H1 (cell line): ENCODE measurements at regions of chr6 and their contacts with region 1.

Region 1: GRCh38 chr6:158143700-158144099 is 24.4 kb downstream of the SERAC1 start:
- DNase-seq: no peak
- H3K4me3 ChIP-seq: no peak overlapping the region
- H3K27ac ChIP-seq: no peak overlapping the region
- H3K4me1 ChIP-seq: no peaks in the 10 kb centered on the region
- H3K27me3 ChIP-seq: no peaks in the 10 kb centered on the region
- CTCF ChIP-seq: peak; percentile 24 to 71 (median 71)
- EP300 ChIP-seq: no peak
- POLR2A ChIP-seq: no peak
- RAD21 ChIP-seq: peak; percentile 69 to 79

Region 2: DNA sequence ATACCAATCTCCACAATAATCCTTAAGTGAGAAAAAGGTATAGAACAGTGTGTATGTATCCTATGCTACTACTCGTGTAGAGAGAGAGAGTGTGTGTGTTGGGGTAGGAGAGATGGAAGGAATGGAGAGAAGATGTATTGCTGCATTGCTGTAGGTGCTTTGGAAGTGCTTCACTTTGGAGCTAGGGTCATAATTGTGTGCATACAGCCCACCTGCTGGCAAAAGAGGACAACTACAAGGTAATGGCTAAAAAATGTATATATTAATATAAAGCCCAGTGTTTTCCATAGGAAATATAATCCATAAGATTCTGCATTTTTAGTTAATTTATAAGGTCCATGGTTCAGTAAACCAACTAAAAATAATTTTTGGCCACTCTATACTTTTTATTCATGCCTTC is 11.8 kb before region 1 on chr6:
- CTCF ChIA-PET with region 1: interaction called, 39 read pairs
- POLR2A ChIA-PET with region 1: no interaction called
- DNase-seq: no peak
- H3K4me3 ChIP-seq: no peak overlapping the region
- H3K27ac ChIP-seq: no peak overlapping the region
- H3K4me1 ChIP-seq: no peaks in the 10 kb centered on the region
- H3K27me3 ChIP-seq: no peaks in the 10 kb centered on the region
- CTCF ChIP-seq: peak in 1 of 3 experiments; percentile 27; a peak in 1 of 4 replicates
- EP300 ChIP-seq: no peak
- POLR2A ChIP-seq: no peak
- RAD21 ChIP-seq: peak; percentile 21 to 39; a peak in 2 of 4 replicates

Region 3: GRCh38 chr6:158158748-158159147 is 15.0 kb after region 1 on chr6:
- CTCF ChIA-PET with region 1: interaction called, 17 read pairs
- POLR2A ChIA-PET with region 1: no interaction called
- DNase-seq: no peak
- H3K4me3 ChIP-seq: no peak overlapping the region
- H3K27ac ChIP-seq: no peak overlapping the region
- H3K4me1 ChIP-seq: peaks cover 0 to 10% (median 5%) of the 10 kb centered on the region in 4 experiments; a peak in 4 of 7 replicates
- H3K27me3 ChIP-seq: no peaks in the 10 kb centered on the region; a peak in 1 of 7 replicates
- CTCF ChIP-seq: no peak
- EP300 ChIP-seq: no peak
- POLR2A ChIP-seq: no peak
- RAD21 ChIP-seq: no peak

Region 4: GRCh38 chr6:158194487-158195280 is 51.0 kb after region 1 on chr6:
- CTCF ChIA-PET with region 1: interaction called, 24 read pairs
- POLR2A ChIA-PET with region 1: no interaction called
- DNase-seq: no peak
- H3K4me3 ChIP-seq: peak overlapping the region; percentile 12 to 47 (median 25); a peak in 6 of 8 replicates
- H3K27ac ChIP-seq: no peak overlapping the region
- H3K4me1 ChIP-seq: peaks cover 0 to 10% (median 3%) of the 10 kb centered on the region in 4 experiments; a peak in 3 of 7 replicates
- H3K27me3 ChIP-seq: no peaks in the 10 kb centered on the region
- CTCF ChIP-seq: no peak
- EP300 ChIP-seq: no peak
- POLR2A ChIP-seq: no peak
- RAD21 ChIP-seq: no peak